ENCODE measurements at regions of chr6 and their contacts with region 1.

Region 1: GRCh38 chr6:12890171-12890790 is 173.7 kb downstream of the PHACTR1 start:
- DNase-seq: no peak
- H3K4me3 ChIP-seq: no peak overlapping the region
- H3K27ac ChIP-seq: no peak overlapping the region
- H3K4me1 ChIP-seq: no peaks in the 10 kb centered on the region
- H3K27me3 ChIP-seq: no peaks in the 10 kb centered on the region

Region 2: GRCh38 chr6:11618533-11618932 is 1271.7 kb before region 1 on chr6:
- in situ Hi-C with region 1: loop called (anchors 25 kb)
- DNase-seq: peak; percentile 26
- H3K4me3 ChIP-seq: no peak overlapping the region
- H3K27ac ChIP-seq: no peak overlapping the region
- H3K4me1 ChIP-seq: peaks cover 31% of the 10 kb centered on the region
- H3K27me3 ChIP-seq: no peaks in the 10 kb centered on the region

Region 3: GRCh38 chr6:12383448-12383847 is 506.8 kb before region 1 on chr6:
- in situ Hi-C with region 1: loop called (anchors 25 kb)
- DNase-seq: no peak
- H3K4me3 ChIP-seq: no peak overlapping the region
- H3K27ac ChIP-seq: no peak overlapping the region
- H3K4me1 ChIP-seq: peaks cover 18% of the 10 kb centered on the region
- H3K27me3 ChIP-seq: no peaks in the 10 kb centered on the region

Region 4: GRCh38 chr6:12648171-12648570 is 242.1 kb before region 1 on chr6:
- in situ Hi-C with region 1: loop called (anchors 10 kb)
- DNase-seq: no peak
- H3K4me3 ChIP-seq: no peak overlapping the region
- H3K27ac ChIP-seq: no peak overlapping the region
- H3K4me1 ChIP-seq: no peaks in the 10 kb centered on the region
- H3K27me3 ChIP-seq: no peaks in the 10 kb centered on the region